ENCODE measurements at regions of chr5 and their contacts with region 1.

Region 1: GRCh38 chr5:68252673-68253623 is 37.4 kb downstream of the PIK3R1 start:
- DNase-seq: peak; percentile 42
- H3K4me3 ChIP-seq: no peak overlapping the region
- H3K27ac ChIP-seq: peak overlapping the region; percentile 20 to 47
- H3K4me1 ChIP-seq: peaks cover 9% of the 10 kb centered on the region
- H3K27me3 ChIP-seq: no peaks in the 10 kb centered on the region
- CTCF ChIP-seq: peak; percentile 23 to 72 (median 58)
- POLR2A ChIP-seq: no peak

Region 2: GRCh38 chr5:67453111-67453905 is 799.6 kb before region 1 on chr5:
- intact Hi-C with region 1: loop called (anchors 10 kb)
- DNase-seq: no peak
- H3K4me3 ChIP-seq: no peak overlapping the region
- H3K27ac ChIP-seq: no peak overlapping the region
- H3K4me1 ChIP-seq: no peaks in the 10 kb centered on the region
- H3K27me3 ChIP-seq: no peaks in the 10 kb centered on the region
- CTCF ChIP-seq: no peak
- POLR2A ChIP-seq: no peak

Region 3: GRCh38 chr5:67493676-67494075 is 759.3 kb before region 1 on chr5:
- intact Hi-C with region 1: loop called (anchors 5 kb)
- DNase-seq: peak; percentile 38
- H3K4me3 ChIP-seq: no peak overlapping the region
- H3K27ac ChIP-seq: no peak overlapping the region
- H3K4me1 ChIP-seq: no peaks in the 10 kb centered on the region
- H3K27me3 ChIP-seq: no peaks in the 10 kb centered on the region
- CTCF ChIP-seq: peak in 3 of 4 experiments; percentile 28 to 37 (median 35)
- POLR2A ChIP-seq: no peak

Region 4: GRCh38 chr5:67720162-67720772 is 532.7 kb before region 1 on chr5:
- intact Hi-C with region 1: no loop called
- DNase-seq: no peak
- H3K4me3 ChIP-seq: no peak overlapping the region
- H3K27ac ChIP-seq: no peak overlapping the region
- H3K4me1 ChIP-seq: no peaks in the 10 kb centered on the region
- H3K27me3 ChIP-seq: no peaks in the 10 kb centered on the region
- CTCF ChIP-seq: no peak
- POLR2A ChIP-seq: no peak

Region 5: GRCh38 chr5:67799732-67800234 is 453.2 kb before region 1 on chr5:
- intact Hi-C with region 1: loop called (anchors 5 kb)
- DNase-seq: no peak
- H3K4me3 ChIP-seq: no peak overlapping the region
- H3K27ac ChIP-seq: no peak overlapping the region
- H3K4me1 ChIP-seq: no peaks in the 10 kb centered on the region
- H3K27me3 ChIP-seq: no peaks in the 10 kb centered on the region
- CTCF ChIP-seq: no peak
- POLR2A ChIP-seq: no peak

Region 6: GRCh38 chr5:67989456-67989855 is 263.5 kb before region 1 on chr5:
- intact Hi-C with region 1: no loop called
- DNase-seq: no peak
- H3K4me3 ChIP-seq: no peak overlapping the region
- H3K27ac ChIP-seq: no peak overlapping the region
- H3K4me1 ChIP-seq: no peaks in the 10 kb centered on the region
- H3K27me3 ChIP-seq: no peaks in the 10 kb centered on the region
- CTCF ChIP-seq: no peak
- POLR2A ChIP-seq: no peak

Region 7: DNA sequence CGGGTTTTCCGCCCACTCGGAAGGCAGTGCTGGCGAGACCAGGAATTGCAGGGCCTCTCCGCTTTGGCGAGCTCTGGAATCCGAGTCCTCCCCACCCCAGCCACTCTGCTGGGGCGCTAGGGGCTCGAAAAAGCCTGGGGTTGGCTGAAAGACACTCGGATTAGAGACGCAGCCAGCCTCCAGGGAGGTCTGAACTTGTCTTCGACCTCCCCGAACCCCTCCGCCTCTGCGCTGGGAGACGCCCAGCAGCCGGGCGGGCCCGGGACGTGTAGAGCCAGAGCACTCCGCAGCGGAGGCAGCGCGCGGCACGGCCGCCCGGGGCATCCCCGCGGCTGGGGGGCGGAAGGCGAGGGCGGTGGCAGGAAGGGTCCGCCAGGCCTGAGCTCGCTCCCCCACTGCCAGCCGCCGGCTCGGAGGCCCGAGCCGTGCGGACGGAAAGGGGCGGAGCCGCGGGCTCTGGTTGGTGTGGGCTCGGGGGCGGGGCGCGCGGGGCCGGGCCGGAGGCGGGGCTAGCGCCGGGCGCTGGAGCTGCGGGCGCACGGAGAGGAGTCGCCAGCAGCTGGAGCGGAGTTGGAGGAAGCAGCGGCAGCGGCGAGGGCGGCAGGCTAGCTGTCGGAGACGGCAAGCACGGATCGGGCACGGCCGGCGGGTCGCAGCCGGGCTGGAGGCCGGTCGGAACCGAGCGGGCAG is 37.6 kb before region 1 on chr5 and contains the start of gene PIK3R1:
- intact Hi-C with region 1: loop called (anchors 5 kb)
- DNase-seq: peak; percentile 96
- H3K4me3 ChIP-seq: peak within 1 kb of the TSS; percentile 67 to 86
- H3K27ac ChIP-seq: peak within 1 kb of the TSS; percentile 95 to 96
- H3K4me1 ChIP-seq: no peaks in the 10 kb centered on the region
- H3K27me3 ChIP-seq: no peaks in the 10 kb centered on the region
- CTCF ChIP-seq: peak in 3 of 4 experiments; percentile 31 to 63 (median 52)
- POLR2A ChIP-seq: peak; percentile 95
- total RNA-seq, gene PIK3R1: 71.6 to 81.2 TPM

Measured in prostate gland (tissue), 2 donors.